Caco-2 (cell line): ENCODE measurements at regions of chr2 and their contacts with region 1.

Region 1: GRCh38 chr2:114729026-114729425 is 286.6 kb downstream of the DPP10 start:
- DNase-seq: peak in 1 of 2 experiments; percentile 24
- H3K4me3 ChIP-seq: no peak overlapping the region
- H3K4me3 Mint-ChIP-seq: no peak overlapping the region
- H3K27ac Mint-ChIP-seq: no peak overlapping the region
- H3K4me1 ChIP-seq: peaks cover 17% of the 10 kb centered on the region
- H3K4me1 Mint-ChIP-seq: peaks cover 21% of the 10 kb centered on the region
- H3K27me3 ChIP-seq: no peaks in the 10 kb centered on the region
- H3K27me3 Mint-ChIP-seq: no peaks in the 10 kb centered on the region
- CTCF ChIP-seq: peak; percentile 28 to 34

Region 2: GRCh38 chr2:114610677-114611076 is 118.3 kb before region 1 on chr2:
- CTCF ChIA-PET with region 1: no interaction called
- POLR2A ChIA-PET with region 1: no interaction called
- intact Hi-C with region 1: loop called (anchors 2 kb)
- DNase-seq: no peak
- H3K4me3 ChIP-seq: no peak overlapping the region
- H3K4me3 Mint-ChIP-seq: no peak overlapping the region
- H3K27ac Mint-ChIP-seq: no peak overlapping the region
- H3K4me1 ChIP-seq: no peaks in the 10 kb centered on the region
- H3K4me1 Mint-ChIP-seq: no peaks in the 10 kb centered on the region
- H3K27me3 ChIP-seq: no peaks in the 10 kb centered on the region
- H3K27me3 Mint-ChIP-seq: peaks cover 9% of the 10 kb centered on the region
- CTCF ChIP-seq: no peak

Region 3: DNA sequence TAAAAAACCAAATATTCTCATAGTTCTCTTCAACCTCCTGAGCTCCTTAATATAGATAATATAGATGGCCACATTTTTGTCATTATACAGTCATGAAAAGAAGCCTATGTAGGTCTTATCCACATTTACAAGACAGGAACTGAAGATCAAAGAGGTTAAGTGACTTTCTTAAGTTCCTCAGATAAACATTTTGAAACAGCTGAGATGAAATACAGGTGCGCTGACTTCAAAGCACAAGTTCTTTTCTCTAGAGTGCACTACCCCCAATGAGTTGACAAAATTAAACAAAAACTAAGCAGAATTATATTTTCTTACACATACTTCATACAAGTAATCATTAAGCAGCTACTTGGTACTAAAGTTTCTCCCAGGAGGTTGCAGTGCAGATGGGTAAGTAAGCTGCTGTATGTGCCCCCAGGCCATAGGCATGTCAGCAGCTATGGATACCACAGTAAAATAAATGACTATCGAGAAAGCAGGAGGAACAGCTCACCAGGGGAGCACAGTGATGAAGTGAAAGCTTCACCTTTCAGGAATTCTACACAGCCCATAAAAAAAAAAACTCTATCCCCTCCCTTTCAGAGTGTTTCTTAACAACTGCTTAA is 86.8 kb before region 1 on chr2:
- CTCF ChIA-PET with region 1: no interaction called
- POLR2A ChIA-PET with region 1: interaction called, 3 read pairs
- intact Hi-C with region 1: loop called (anchors 1 kb)
- DNase-seq: peak; percentile 86 to 89
- H3K4me3 ChIP-seq: no peak overlapping the region
- H3K4me3 Mint-ChIP-seq: peak overlapping the region; percentile 45
- H3K27ac Mint-ChIP-seq: peak overlapping the region; percentile 94
- H3K4me1 ChIP-seq: peaks cover 31% of the 10 kb centered on the region
- H3K4me1 Mint-ChIP-seq: peaks cover 27% of the 10 kb centered on the region
- H3K27me3 ChIP-seq: no peaks in the 10 kb centered on the region
- H3K27me3 Mint-ChIP-seq: no peaks in the 10 kb centered on the region
- CTCF ChIP-seq: no peak

Region 4: GRCh38 chr2:114709936-114710850 is 18.8 kb before region 1 on chr2:
- CTCF ChIA-PET with region 1: no interaction called
- POLR2A ChIA-PET with region 1: interaction called, 3 read pairs
- intact Hi-C with region 1: loop called (anchors 2 kb)
- DNase-seq: no peak
- H3K4me3 ChIP-seq: no peak overlapping the region
- H3K4me3 Mint-ChIP-seq: no peak overlapping the region
- H3K27ac Mint-ChIP-seq: no peak overlapping the region
- H3K4me1 ChIP-seq: no peaks in the 10 kb centered on the region
- H3K4me1 Mint-ChIP-seq: no peaks in the 10 kb centered on the region
- H3K27me3 ChIP-seq: no peaks in the 10 kb centered on the region
- H3K27me3 Mint-ChIP-seq: no peaks in the 10 kb centered on the region
- CTCF ChIP-seq: no peak

Region 5: DNA sequence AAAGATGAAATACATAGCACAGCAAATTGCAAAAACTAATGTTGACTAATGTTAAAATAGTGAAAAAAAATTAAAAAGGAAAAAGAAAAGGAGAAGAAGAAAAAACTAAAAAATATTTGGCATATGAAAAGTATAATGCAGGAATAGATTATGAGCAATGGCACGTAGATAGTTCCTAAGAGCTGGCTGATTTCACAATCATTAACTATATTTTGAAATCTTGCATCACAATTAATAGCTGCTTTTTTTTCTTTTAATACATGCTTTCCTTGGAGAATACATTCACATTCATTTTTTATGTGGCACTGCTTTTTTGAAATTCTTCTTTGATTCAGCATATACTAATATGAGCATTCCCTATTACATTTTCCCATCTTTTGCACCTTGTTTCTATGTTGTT is 13.2 kb after region 1 on chr2:
- CTCF ChIA-PET with region 1: no interaction called
- POLR2A ChIA-PET with region 1: no interaction called
- intact Hi-C with region 1: no loop called
- DNase-seq: no peak
- H3K4me3 ChIP-seq: no peak overlapping the region
- H3K4me3 Mint-ChIP-seq: no peak overlapping the region
- H3K27ac Mint-ChIP-seq: no peak overlapping the region
- H3K4me1 ChIP-seq: peaks cover 6% of the 10 kb centered on the region; the same call in 1 of the 2 replicates
- H3K4me1 Mint-ChIP-seq: peaks cover 7% of the 10 kb centered on the region
- H3K27me3 ChIP-seq: no peaks in the 10 kb centered on the region
- H3K27me3 Mint-ChIP-seq: no peaks in the 10 kb centered on the region
- CTCF ChIP-seq: no peak

Region 6: DNA sequence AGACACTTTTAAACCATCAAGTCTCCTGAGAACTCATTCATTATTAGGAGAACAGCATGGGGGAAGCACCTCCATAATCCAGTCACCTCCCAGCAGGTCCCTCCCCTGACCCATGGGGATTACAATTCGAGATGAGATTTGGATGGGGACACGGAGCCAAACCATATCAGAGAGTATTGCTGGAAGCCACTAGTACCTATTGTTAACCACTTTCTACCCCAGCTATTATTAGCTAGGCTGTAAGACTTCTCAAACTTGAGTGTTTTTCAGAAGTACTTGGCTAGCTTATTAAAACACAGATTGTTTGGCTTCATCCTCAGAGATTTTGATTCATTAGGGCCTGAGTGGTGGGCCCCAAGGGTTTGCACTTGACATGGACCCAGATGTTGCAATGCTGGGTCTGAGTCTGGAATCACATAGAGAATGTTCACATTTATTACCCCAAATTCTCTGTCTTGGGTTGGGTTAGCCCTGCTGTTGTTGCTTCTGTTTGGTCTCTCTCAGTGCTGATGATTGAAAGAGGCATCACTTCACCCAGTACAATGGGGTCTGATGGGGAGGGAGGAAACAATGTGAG is 220.3 kb after region 1 on chr2:
- CTCF ChIA-PET with region 1: no interaction called
- POLR2A ChIA-PET with region 1: no interaction called
- intact Hi-C with region 1: loop called (anchors 10 kb)
- DNase-seq: no peak
- H3K4me3 ChIP-seq: no peak overlapping the region
- H3K4me3 Mint-ChIP-seq: no peak overlapping the region
- H3K27ac Mint-ChIP-seq: no peak overlapping the region
- H3K4me1 ChIP-seq: no peaks in the 10 kb centered on the region
- H3K4me1 Mint-ChIP-seq: no peaks in the 10 kb centered on the region
- H3K27me3 ChIP-seq: no peaks in the 10 kb centered on the region
- H3K27me3 Mint-ChIP-seq: peaks cover 7% of the 10 kb centered on the region
- CTCF ChIP-seq: no peak

Region 7: GRCh38 chr2:115083225-115083624 is 354.2 kb after region 1 on chr2:
- CTCF ChIA-PET with region 1: no interaction called
- POLR2A ChIA-PET with region 1: no interaction called
- intact Hi-C with region 1: loop called (anchors 1 kb)
- DNase-seq: peak in 1 of 2 experiments; percentile 40
- H3K4me3 ChIP-seq: no peak overlapping the region
- H3K4me3 Mint-ChIP-seq: no peak overlapping the region
- H3K27ac Mint-ChIP-seq: no peak overlapping the region
- H3K4me1 ChIP-seq: no peaks in the 10 kb centered on the region
- H3K4me1 Mint-ChIP-seq: no peaks in the 10 kb centered on the region
- H3K27me3 ChIP-seq: no peaks in the 10 kb centered on the region
- H3K27me3 Mint-ChIP-seq: no peaks in the 10 kb centered on the region
- CTCF ChIP-seq: peak; percentile 42 to 54

Region 8: GRCh38 chr2:115183144-115183543 is 454.1 kb after region 1 on chr2:
- CTCF ChIA-PET with region 1: no interaction called
- POLR2A ChIA-PET with region 1: no interaction called
- intact Hi-C with region 1: loop called (anchors 5 kb)
- DNase-seq: peak in 1 of 2 experiments; percentile 19
- H3K4me3 ChIP-seq: no peak overlapping the region
- H3K4me3 Mint-ChIP-seq: no peak overlapping the region
- H3K27ac Mint-ChIP-seq: no peak overlapping the region
- H3K4me1 ChIP-seq: no peaks in the 10 kb centered on the region
- H3K4me1 Mint-ChIP-seq: no peaks in the 10 kb centered on the region
- H3K27me3 ChIP-seq: no peaks in the 10 kb centered on the region
- H3K27me3 Mint-ChIP-seq: no peaks in the 10 kb centered on the region
- CTCF ChIP-seq: peak; percentile 19 to 32